Vagina (tissue), 2 donors: ENCODE measurements at regions of chr5 and their contacts with region 1.

Region 1: GRCh38 chr5:40904205-40904993 is 4.9 kb upstream of the C7 start:
- DNase-seq: no peak
- H3K4me3 ChIP-seq: no peak overlapping the region
- H3K27ac ChIP-seq: no peak overlapping the region
- H3K4me1 ChIP-seq: no peaks in the 10 kb centered on the region
- H3K27me3 ChIP-seq: no peaks in the 10 kb centered on the region
- CTCF ChIP-seq: peak; percentile 41 to 90 (median 61)
- POLR2A ChIP-seq: no peak

Region 2: DNA sequence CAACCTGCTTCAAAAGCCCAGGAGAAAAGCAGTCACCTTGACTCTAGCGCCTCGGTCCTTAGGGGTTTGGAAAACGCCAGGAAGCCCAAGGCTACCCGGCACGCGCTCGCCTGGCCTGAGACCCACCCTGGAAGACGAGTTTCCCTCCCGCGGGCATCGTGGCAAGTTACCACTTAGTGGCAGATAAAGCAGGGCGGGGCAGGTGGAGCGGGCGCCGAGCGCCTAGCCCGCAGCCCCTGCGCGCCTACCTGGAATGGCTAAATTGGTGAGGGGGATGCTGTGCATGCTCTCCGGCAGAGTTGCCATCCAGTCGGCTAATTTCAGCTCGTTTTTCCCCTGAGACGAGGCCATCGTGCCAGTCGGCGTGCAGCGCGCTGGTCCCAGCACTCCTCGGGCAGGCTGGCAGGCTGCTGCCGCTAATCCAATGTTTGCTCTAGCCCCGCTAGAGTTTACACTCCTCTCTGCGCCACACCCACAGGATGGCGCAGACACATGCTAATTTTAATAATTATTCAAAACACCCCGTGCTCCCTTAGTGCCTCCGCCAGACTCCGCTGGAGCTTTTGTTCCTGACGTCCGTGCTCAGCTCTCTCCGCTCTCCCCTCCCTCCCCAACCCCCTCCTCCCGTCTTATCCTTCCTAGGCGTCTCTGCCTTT is 605.9 kb after region 1 on chr5 and contains the start of gene PLCXD3:
- intact Hi-C with region 1: loop called (anchors 10 kb)
- DNase-seq: no peak
- H3K4me3 ChIP-seq: peak within 1 kb of the TSS; percentile 49 to 55
- H3K27ac ChIP-seq: no peak within 1 kb of the TSS
- H3K4me1 ChIP-seq: peaks cover 10% of the 10 kb centered on the region
- H3K27me3 ChIP-seq: no peaks in the 10 kb centered on the region
- CTCF ChIP-seq: no peak
- POLR2A ChIP-seq: no peak
- total RNA-seq, gene PLCXD3: 10.6 TPM